HCT116 (cell line): ENCODE measurements at regions of chr3 and their contacts with region 1.

Region 1: DNA sequence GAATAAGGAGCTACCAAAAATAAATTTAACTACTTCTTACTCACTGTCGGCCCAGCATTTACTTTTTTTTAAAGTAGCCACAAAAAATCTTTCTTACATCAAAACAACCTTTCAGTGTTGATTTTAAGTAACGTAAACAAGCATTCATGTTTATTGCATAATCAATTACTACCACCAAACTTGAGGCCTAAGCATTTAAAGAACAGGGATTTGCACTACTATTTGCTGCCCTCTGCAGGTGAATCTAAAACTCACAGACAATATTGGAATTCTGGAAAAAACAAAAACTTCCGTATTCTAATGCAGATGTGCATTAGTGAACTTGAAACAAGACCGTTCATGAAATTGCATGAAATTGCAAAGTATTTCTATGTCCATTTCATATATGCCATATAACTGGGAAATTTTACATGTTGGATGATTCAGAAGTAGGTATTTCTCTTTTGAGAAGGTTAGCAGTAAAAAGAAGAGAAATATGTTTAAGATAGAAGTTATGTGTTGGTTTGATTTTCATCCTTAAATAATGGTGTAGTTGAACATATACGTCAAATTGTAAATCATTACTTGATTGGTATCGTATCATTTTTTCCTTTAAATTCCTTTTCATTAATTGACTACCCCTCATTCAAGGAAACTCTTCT is 55.6 kb downstream of the CGGBP1 start:
- DNase-seq: peak; percentile 50
- ATAC-seq: peak; percentile 58; the same call in 1 of the 2 replicates
- H3K4me3 ChIP-seq: no peak overlapping the region
- H3K27ac ChIP-seq: no peak overlapping the region
- H3K4me1 ChIP-seq: no peaks in the 10 kb centered on the region
- H3K27me3 ChIP-seq: no peaks in the 10 kb centered on the region
- CTCF ChIP-seq: peak; percentile 56 to 83 (median 61); a peak in 4 of 6 replicates
- POLR2A ChIP-seq: no peak
- RAD21 ChIP-seq: peak; percentile 79

Region 2: DNA sequence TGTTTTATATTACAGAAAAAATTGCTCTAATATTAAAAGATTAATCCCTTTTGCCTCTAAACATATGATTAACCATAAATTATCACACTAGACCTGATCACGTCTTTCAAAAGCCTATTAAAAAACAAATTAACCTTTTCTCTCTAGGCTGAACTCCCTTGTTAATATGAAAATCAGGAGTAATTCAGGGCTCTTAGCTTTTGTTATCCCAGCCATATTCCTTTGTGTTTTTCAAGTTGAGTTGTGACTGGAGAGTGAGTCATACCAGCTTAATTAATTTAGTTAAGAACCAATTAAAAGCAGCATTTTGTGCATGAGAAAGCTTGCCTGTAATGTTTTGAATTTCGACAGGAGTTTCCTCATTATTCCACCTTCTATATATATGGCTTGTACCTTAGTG is 1398.1 kb before region 1 on chr3:
- CTCF ChIA-PET with region 1: no interaction called
- POLR2A ChIA-PET with region 1: no interaction called
- RAD21 ChIA-PET with region 1: no interaction called
- intact Hi-C with region 1: no loop called
- DNase-seq: no peak
- ATAC-seq: no peak
- H3K4me3 ChIP-seq: no peak overlapping the region
- H3K27ac ChIP-seq: no peak overlapping the region
- H3K4me1 ChIP-seq: no peaks in the 10 kb centered on the region
- H3K27me3 ChIP-seq: no peaks in the 10 kb centered on the region
- CTCF ChIP-seq: no peak
- POLR2A ChIP-seq: no peak
- RAD21 ChIP-seq: no peak

Region 3: GRCh38 chr3:86774082-86774691 is 1229.0 kb before region 1 on chr3:
- CTCF ChIA-PET with region 1: interaction called, 3 read pairs
- POLR2A ChIA-PET with region 1: no interaction called
- RAD21 ChIA-PET with region 1: no interaction called
- intact Hi-C with region 1: loop called (anchors 2 kb)
- DNase-seq: no peak
- ATAC-seq: no peak
- H3K4me3 ChIP-seq: no peak overlapping the region
- H3K27ac ChIP-seq: no peak overlapping the region
- H3K4me1 ChIP-seq: no peaks in the 10 kb centered on the region
- H3K27me3 ChIP-seq: no peaks in the 10 kb centered on the region
- CTCF ChIP-seq: peak; percentile 20 to 54 (median 29); a peak in 3 of 6 replicates
- POLR2A ChIP-seq: no peak
- RAD21 ChIP-seq: peak; percentile 45; the same call in 1 of the 2 replicates

Region 4: DNA sequence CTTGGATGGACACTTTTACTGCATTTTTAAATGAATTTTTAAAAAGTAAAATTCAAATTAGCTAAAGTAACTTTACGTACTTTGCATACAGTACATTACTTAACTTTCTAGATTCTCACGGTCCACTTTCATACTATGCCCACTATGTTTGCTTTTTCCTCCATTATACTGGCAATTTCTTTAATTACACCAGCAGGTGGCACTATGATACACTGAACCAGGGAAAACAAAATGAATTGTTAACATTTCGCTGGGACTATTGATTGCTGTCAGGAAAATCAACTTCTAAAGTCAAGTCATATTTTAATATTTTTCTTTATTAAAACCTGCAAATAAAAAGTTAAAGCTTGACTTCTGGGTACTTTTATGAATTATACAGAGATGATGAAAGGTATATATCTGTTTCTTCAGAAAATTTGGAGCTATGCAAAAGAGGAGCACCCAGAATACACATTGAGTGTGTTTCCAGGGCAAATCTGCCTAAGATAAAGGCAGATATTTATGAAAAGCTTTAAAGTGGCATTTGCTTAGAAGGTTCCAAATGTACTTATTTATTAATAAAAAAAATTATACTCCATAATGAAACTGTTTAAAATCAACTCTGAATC is 705.0 kb before region 1 on chr3:
- CTCF ChIA-PET with region 1: interaction called, 26 read pairs
- POLR2A ChIA-PET with region 1: no interaction called
- RAD21 ChIA-PET with region 1: no interaction called
- intact Hi-C with region 1: loop called (anchors 1 kb)
- DNase-seq: peak; percentile 46
- ATAC-seq: peak; percentile 84
- H3K4me3 ChIP-seq: no peak overlapping the region
- H3K27ac ChIP-seq: no peak overlapping the region
- H3K4me1 ChIP-seq: no peaks in the 10 kb centered on the region
- H3K27me3 ChIP-seq: no peaks in the 10 kb centered on the region
- CTCF ChIP-seq: peak; percentile 50 to 72 (median 62); a peak in 5 of 6 replicates
- POLR2A ChIP-seq: no peak
- RAD21 ChIP-seq: peak; percentile 80

Region 5: GRCh38 chr3:87503900-87504508 is 499.2 kb before region 1 on chr3:
- CTCF ChIA-PET with region 1: no interaction called
- POLR2A ChIA-PET with region 1: no interaction called
- RAD21 ChIA-PET with region 1: no interaction called
- intact Hi-C with region 1: loop called (anchors 10 kb)
- DNase-seq: peak; percentile 75
- ATAC-seq: peak; percentile 74
- H3K4me3 ChIP-seq: no peak overlapping the region
- H3K27ac ChIP-seq: no peak overlapping the region
- H3K4me1 ChIP-seq: no peaks in the 10 kb centered on the region
- H3K27me3 ChIP-seq: no peaks in the 10 kb centered on the region
- CTCF ChIP-seq: peak; percentile 68 to 83 (median 77); a peak in 5 of 6 replicates
- POLR2A ChIP-seq: no peak
- RAD21 ChIP-seq: peak; percentile 79

Region 6: DNA sequence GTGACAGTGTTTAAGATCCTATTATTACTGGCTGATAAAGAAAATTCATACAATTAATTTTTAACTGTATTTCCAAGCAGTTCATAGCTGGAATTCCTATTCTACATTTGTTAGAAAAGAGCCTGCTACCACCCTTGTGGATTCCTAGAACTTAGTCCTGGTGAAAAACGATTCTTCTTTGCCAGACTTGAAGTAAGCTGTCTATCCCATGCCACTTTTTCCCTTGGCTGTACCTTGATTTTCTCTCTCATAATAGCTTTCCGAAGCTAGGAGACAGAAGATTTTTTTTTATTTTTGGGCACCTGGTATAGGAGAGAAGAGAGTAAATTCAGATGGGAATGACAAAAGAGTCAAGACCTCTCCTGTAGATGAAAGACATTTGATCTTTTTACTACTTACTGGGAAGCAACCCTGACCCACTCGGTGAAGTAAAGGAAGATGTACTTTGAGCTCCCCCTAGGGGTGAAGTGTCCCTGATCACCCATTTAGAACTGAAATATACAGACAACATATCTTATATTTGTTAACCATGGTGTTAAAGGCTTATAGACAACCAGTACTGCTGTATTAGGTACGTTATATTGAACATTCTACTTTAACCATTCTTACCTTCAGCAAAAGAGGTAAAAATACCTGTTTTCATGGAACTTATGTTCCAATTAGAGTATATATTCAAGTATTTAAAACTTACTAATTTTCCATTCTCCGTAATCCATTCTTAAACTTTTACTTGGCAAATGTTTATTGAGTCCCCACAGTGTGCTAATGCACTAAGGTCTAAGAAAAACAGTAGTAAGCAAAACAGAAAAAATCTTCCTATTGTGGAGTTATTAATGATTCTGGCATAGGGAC is 110.3 kb after region 1 on chr3:
- CTCF ChIA-PET with region 1: interaction called, 15 read pairs
- POLR2A ChIA-PET with region 1: no interaction called
- RAD21 ChIA-PET with region 1: no interaction called
- intact Hi-C with region 1: no loop called
- DNase-seq: peak; percentile 57
- ATAC-seq: peak; percentile 96
- H3K4me3 ChIP-seq: no peak overlapping the region
- H3K27ac ChIP-seq: no peak overlapping the region
- H3K4me1 ChIP-seq: no peaks in the 10 kb centered on the region
- H3K27me3 ChIP-seq: no peaks in the 10 kb centered on the region
- CTCF ChIP-seq: peak; percentile 22 to 83 (median 64); a peak in 4 of 6 replicates
- POLR2A ChIP-seq: no peak
- RAD21 ChIP-seq: peak; percentile 49

Region 7: DNA sequence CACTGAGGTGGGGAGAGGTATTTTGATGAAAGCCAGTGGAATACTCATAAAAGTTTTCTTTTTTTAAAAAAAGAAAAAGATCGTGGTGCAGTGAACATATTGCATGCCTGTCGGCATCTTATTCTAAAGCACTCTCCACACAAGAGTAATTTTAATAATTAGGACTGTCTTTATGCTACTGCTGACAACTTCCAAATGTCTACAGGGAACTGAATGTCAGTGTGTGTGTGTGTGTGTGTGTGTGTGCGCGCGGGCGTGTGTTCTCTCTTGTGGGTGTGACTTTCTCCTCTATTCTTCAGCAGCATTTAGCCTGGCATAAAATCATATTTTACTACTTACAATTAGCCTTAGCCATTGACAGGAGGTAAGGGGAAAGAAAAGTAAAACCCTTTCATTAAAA is 415.0 kb after region 1 on chr3:
- CTCF ChIA-PET with region 1: no interaction called
- POLR2A ChIA-PET with region 1: no interaction called
- RAD21 ChIA-PET with region 1: no interaction called
- intact Hi-C with region 1: no loop called
- DNase-seq: no peak
- ATAC-seq: no peak
- H3K4me3 ChIP-seq: no peak overlapping the region
- H3K27ac ChIP-seq: no peak overlapping the region
- H3K4me1 ChIP-seq: no peaks in the 10 kb centered on the region
- H3K27me3 ChIP-seq: no peaks in the 10 kb centered on the region
- CTCF ChIP-seq: no peak
- POLR2A ChIP-seq: no peak
- RAD21 ChIP-seq: no peak